ENCODE measurements at regions of chr7 and their contacts with region 1.

Region 1: DNA sequence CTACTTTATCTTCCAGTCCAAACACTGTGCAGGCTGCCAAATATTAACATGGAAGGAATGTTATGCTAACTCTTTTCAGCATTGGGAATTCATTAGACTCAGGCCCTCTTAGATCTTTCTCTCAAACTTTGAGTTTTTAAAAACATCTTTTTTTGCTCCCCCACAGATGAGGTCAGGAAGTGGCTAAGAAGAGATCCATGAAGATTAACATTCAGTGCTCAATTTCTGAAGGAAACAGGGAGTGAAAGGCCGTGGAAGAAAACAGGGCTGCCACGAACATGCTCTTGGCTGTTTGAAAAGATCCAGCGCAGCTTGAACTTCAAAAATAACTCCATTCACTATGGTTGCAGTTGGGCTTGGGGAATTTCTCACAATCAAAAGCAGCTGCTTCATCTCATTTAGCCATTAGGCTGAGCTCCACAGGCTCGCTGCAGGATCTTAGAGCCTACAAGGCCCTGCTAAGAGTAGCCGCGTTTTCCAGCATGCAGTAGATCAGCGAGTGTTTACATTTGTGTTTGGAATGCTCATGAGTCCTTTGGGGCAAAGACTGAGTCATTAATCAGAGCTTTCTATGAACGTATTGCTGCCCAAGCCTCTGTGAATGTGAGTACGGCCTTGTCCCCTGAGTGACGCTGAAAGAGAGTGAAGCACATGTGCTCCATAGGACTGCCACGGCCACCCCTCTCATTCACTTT is 41.2 kb upstream of the TNS3 start:
- DNase-seq: no peak
- H3K4me3 ChIP-seq: no peak overlapping the region
- H3K27ac ChIP-seq: peak overlapping the region; percentile 67 to 78 (median 74)
- H3K4me1 ChIP-seq: peaks cover 8 to 25% (median 15%) of the 10 kb centered on the region in 4 donors
- H3K27me3 ChIP-seq: no peaks in the 10 kb centered on the region
- CTCF ChIP-seq: no peak
- EP300 ChIP-seq: no peak
- POLR2A ChIP-seq: no peak

Region 2: GRCh38 chr7:47453093-47454049 is 169.7 kb before region 1 on chr7:
- in situ Hi-C with region 1: no loop called
- intact Hi-C with region 1: loop called (anchors 1 kb)
- DNase-seq: peak; percentile 65
- H3K4me3 ChIP-seq: no peak overlapping the region
- H3K27ac ChIP-seq: peak overlapping the region; percentile 71 to 78 (median 72)
- H3K4me1 ChIP-seq: peaks cover 36 to 48% (median 40%) of the 10 kb centered on the region in 4 donors
- H3K27me3 ChIP-seq: no peaks in the 10 kb centered on the region
- CTCF ChIP-seq: no peak
- EP300 ChIP-seq: no peak
- POLR2A ChIP-seq: peak; percentile 20

Region 3: GRCh38 chr7:47669061-47669891 is 46.2 kb after region 1 on chr7:
- in situ Hi-C with region 1: no loop called
- intact Hi-C with region 1: no loop called
- DNase-seq: peak; percentile 73
- H3K4me3 ChIP-seq: no peak overlapping the region
- H3K27ac ChIP-seq: peak overlapping the region; percentile 53 to 70 (median 66)
- H3K4me1 ChIP-seq: no peaks in the 10 kb centered on the region
- H3K27me3 ChIP-seq: no peaks in the 10 kb centered on the region
- CTCF ChIP-seq: no peak
- EP300 ChIP-seq: no peak
- POLR2A ChIP-seq: no peak